ENCODE measurements at regions of chrX and their contacts with region 1.

Region 1: GRCh38 chrX:82945317-82945716 is 562.8 kb upstream of the POU3F4 start:
- DNase-seq: no peak
- H3K4me3 ChIP-seq: no peak overlapping the region
- H3K27ac ChIP-seq: no peak overlapping the region
- H3K4me1 ChIP-seq: no peaks in the 10 kb centered on the region
- H3K27me3 ChIP-seq: no peaks in the 10 kb centered on the region
- CTCF ChIP-seq: no peak
- EP300 ChIP-seq: no peak
- POLR2A ChIP-seq: no peak

Region 2: GRCh38 chrX:83305381-83305780 is 360.1 kb after region 1 on chrX:
- intact Hi-C with region 1: no loop called
- DNase-seq: no peak
- H3K4me3 ChIP-seq: no peak overlapping the region
- H3K27ac ChIP-seq: no peak overlapping the region
- H3K4me1 ChIP-seq: no peaks in the 10 kb centered on the region
- H3K27me3 ChIP-seq: peaks cover 2% of the 10 kb centered on the region
- CTCF ChIP-seq: no peak
- EP300 ChIP-seq: no peak
- POLR2A ChIP-seq: no peak

Region 3: DNA sequence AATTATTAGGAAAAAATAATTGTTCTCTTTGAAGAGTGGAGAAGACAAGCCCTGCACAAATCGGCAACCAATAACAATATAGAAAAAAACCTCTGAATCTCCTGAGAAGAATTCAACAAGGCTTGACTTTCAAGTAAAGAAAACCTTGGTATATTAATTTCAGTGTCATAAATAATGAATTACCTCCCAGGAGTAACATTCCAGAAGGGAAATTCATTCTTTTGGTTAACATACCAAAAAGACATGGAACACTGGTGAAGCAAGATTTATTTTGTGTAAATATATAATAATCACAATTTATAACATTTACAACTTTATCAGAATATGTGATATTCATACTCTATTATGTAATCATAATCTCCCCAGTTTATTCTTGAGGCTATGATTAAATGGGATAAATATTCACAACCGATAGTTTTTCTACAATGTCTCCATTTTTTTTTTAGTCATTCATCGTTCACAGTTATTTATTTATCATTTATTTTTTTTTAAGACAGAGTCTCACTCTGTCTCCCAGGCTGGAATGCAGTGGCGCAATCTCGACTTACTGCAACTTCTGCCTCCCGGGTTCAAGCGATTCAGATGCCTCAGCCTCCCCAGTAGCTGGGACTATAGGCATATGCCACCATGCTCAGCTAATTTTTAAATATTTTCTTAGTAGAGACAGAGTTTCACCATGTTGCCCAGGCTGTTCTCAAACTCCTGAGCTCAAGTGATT is 1295.7 kb after region 1 on chrX:
- intact Hi-C with region 1: loop called in 1 of 4 experiments (anchors 5 kb)
- DNase-seq: no peak
- H3K4me3 ChIP-seq: no peak overlapping the region
- H3K27ac ChIP-seq: no peak overlapping the region
- H3K4me1 ChIP-seq: no peaks in the 10 kb centered on the region
- H3K27me3 ChIP-seq: no peaks in the 10 kb centered on the region
- CTCF ChIP-seq: no peak
- EP300 ChIP-seq: no peak
- POLR2A ChIP-seq: no peak